ENCODE measurements at regions of chr10 and their contacts with region 1.

Region 1: GRCh38 chr10:125982260-125982948 is 86.0 kb downstream of the FANK1 start:
- DNase-seq: peak; percentile 63
- H3K4me3 ChIP-seq: no peak overlapping the region
- H3K27ac ChIP-seq: no peak overlapping the region
- H3K4me1 ChIP-seq: no peaks in the 10 kb centered on the region
- CTCF ChIP-seq: peak; percentile 83

Region 2: GRCh38 chr10:125799451-125800182 is 182.8 kb before region 1 on chr10:
- CTCF ChIA-PET with region 1: no interaction called
- POLR2A ChIA-PET with region 1: no interaction called
- intact Hi-C with region 1: no loop called
- DNase-seq: no peak
- H3K4me3 ChIP-seq: no peak overlapping the region
- H3K27ac ChIP-seq: no peak overlapping the region
- H3K4me1 ChIP-seq: peaks cover 41% of the 10 kb centered on the region
- CTCF ChIP-seq: no peak

Region 3: DNA sequence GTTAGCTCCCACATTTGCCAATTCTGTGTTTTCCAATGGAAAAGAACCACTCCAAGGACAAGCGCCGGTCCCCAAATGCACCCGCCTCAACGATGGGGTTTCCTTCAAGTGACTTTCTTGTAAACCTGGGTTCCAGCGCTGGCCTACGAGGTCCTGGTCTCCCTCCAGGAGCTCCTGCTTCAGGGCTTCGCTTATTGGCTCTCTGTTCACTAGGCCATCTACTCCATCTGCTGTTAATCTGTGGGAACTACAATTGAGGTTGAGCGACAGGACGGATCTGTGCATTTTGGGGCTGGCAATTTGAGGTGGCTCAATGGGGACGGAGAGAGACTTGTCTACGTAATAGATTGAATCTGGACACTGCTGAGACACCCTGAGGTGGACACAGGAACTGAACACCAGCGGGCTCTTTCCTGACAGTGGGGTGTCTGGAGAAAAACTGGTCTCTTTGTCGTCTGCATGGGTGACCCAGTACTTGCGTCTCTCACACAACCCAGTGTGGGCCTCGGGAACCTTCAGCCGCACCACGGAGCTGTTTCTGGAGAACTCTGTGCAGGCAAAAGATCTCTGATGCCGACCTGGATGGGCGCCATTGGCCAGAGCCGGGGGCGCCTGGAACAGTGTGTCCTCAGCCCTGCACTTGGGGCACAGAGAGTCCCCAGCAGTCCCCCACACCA is 521.8 kb after region 1 on chr10:
- CTCF ChIA-PET with region 1: no interaction called
- POLR2A ChIA-PET with region 1: no interaction called
- intact Hi-C with region 1: loop called (anchors 5 kb)
- DNase-seq: peak; percentile 29
- H3K4me3 ChIP-seq: no peak overlapping the region
- H3K27ac ChIP-seq: no peak overlapping the region
- H3K4me1 ChIP-seq: no peaks in the 10 kb centered on the region
- CTCF ChIP-seq: peak; percentile 68

Region 4: DNA sequence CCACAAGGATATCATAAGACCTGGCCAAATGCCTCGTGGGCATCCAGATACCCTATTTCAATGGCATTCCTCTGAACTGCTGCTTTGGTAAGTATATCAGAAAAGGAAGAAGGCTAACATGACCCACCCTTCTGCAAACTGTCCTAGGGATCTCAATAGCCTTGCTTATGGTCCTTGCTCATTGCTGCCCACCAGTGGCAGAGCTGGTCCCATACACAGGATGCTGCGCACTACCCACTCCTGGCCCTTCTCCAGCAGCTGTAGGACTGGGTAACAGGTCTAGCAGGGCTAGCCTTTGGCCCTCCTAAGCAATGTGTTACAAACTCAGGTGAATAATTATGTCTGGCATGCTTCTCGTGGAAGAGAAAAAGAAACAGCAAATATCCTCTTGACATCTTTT is 615.6 kb after region 1 on chr10:
- CTCF ChIA-PET with region 1: no interaction called
- POLR2A ChIA-PET with region 1: no interaction called
- intact Hi-C with region 1: loop called (anchors 2 kb)
- DNase-seq: peak; percentile 31
- H3K4me3 ChIP-seq: no peak overlapping the region
- H3K27ac ChIP-seq: no peak overlapping the region
- H3K4me1 ChIP-seq: no peaks in the 10 kb centered on the region
- CTCF ChIP-seq: peak; percentile 75

Region 5: GRCh38 chr10:126749015-126749655 is 766.7 kb after region 1 on chr10:
- CTCF ChIA-PET with region 1: no interaction called
- POLR2A ChIA-PET with region 1: no interaction called
- intact Hi-C with region 1: loop called (anchors 5 kb)
- DNase-seq: peak; percentile 38
- H3K4me3 ChIP-seq: no peak overlapping the region
- H3K27ac ChIP-seq: no peak overlapping the region
- H3K4me1 ChIP-seq: no peaks in the 10 kb centered on the region
- CTCF ChIP-seq: peak; percentile 80

Measured in OCI-LY7 (cell line).